CD8-positive, alpha-beta T cell (primary cell): ENCODE measurements at regions of chr10 and their contacts with region 1.

Region 1: GRCh38 chr10:3785257-3785850 is 345 bp upstream of the KLF6 start:
- DNase-seq: peak; percentile 99 to 100 (median 99)
- ATAC-seq: peak; percentile 78
- H3K4me3 ChIP-seq: peak overlapping the region; percentile 78 to 80
- H3K4me3 Mint-ChIP-seq: peak overlapping the region; percentile 97
- H3K27ac ChIP-seq: peak overlapping the region; percentile 99
- H3K27ac Mint-ChIP-seq: peak overlapping the region; percentile 97
- H3K4me1 ChIP-seq: peaks cover 29% of the 10 kb centered on the region
- H3K4me1 Mint-ChIP-seq: peaks cover 36% of the 10 kb centered on the region
- H3K27me3 ChIP-seq: no peaks in the 10 kb centered on the region
- H3K27me3 Mint-ChIP-seq: no peaks in the 10 kb centered on the region
- CTCF ChIP-seq: no peak

Region 2: GRCh38 chr10:3172446-3173170 is 612.7 kb before region 1 on chr10 and contains the start of gene PITRM1:
- CTCF ChIA-PET with region 1: no interaction called
- POLR2A ChIA-PET with region 1: interaction called, 3 read pairs
- intact Hi-C with region 1: loop called in 1 of 2 experiments (anchors 5 kb)
- DNase-seq: peak; percentile 97 to 100 (median 99)
- ATAC-seq: peak; percentile 87
- H3K4me3 ChIP-seq: peak within 1 kb of the TSS; percentile 73 to 98
- H3K4me3 Mint-ChIP-seq: peak within 1 kb of the TSS; percentile 83
- H3K27ac ChIP-seq: peak within 1 kb of the TSS; percentile 71 to 91
- H3K27ac Mint-ChIP-seq: peak within 1 kb of the TSS; percentile 93
- H3K4me1 ChIP-seq: peaks cover 12% of the 10 kb centered on the region
- H3K4me1 Mint-ChIP-seq: peaks cover 25% of the 10 kb centered on the region
- H3K27me3 ChIP-seq: no peaks in the 10 kb centered on the region
- H3K27me3 Mint-ChIP-seq: no peaks in the 10 kb centered on the region
- CTCF ChIP-seq: no peak
- total RNA-seq, gene PITRM1: 73.5 to 82.5 TPM

Region 3: DNA sequence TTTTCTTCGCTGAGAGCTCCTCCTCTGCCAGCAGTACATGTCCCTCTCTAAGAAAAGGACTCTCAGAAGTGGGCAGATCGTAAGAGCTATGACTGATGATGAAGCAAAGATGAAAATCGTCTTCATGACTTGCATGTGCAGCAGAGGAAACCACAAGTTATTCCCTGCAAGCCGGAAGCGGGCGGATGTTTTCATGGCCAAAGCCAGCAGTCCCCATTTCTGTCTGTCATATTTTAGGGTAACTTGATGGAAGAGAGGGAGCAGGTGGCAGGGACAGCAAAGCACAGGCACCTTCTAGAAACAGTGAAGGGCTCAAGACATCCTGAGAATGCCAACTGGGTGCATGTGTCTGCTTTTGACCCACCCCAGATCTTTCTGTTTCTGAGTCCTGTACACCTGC is 20.2 kb before region 1 on chr10:
- CTCF ChIA-PET with region 1: interaction called, 3 read pairs
- POLR2A ChIA-PET with region 1: interaction called, 21 read pairs
- intact Hi-C with region 1: no loop called
- DNase-seq: peak in 5 of 9 experiments; percentile 38 to 70 (median 43)
- ATAC-seq: peak; percentile 61
- H3K4me3 ChIP-seq: peak overlapping the region; percentile 12 to 32
- H3K4me3 Mint-ChIP-seq: peak overlapping the region; percentile 64
- H3K27ac ChIP-seq: peak overlapping the region in 1 of 2 experiments; percentile 42
- H3K27ac Mint-ChIP-seq: peak overlapping the region; percentile 46
- H3K4me1 ChIP-seq: peaks cover 21% of the 10 kb centered on the region
- H3K4me1 Mint-ChIP-seq: peaks cover 50% of the 10 kb centered on the region
- H3K27me3 ChIP-seq: no peaks in the 10 kb centered on the region
- H3K27me3 Mint-ChIP-seq: no peaks in the 10 kb centered on the region
- CTCF ChIP-seq: no peak

Region 4: DNA sequence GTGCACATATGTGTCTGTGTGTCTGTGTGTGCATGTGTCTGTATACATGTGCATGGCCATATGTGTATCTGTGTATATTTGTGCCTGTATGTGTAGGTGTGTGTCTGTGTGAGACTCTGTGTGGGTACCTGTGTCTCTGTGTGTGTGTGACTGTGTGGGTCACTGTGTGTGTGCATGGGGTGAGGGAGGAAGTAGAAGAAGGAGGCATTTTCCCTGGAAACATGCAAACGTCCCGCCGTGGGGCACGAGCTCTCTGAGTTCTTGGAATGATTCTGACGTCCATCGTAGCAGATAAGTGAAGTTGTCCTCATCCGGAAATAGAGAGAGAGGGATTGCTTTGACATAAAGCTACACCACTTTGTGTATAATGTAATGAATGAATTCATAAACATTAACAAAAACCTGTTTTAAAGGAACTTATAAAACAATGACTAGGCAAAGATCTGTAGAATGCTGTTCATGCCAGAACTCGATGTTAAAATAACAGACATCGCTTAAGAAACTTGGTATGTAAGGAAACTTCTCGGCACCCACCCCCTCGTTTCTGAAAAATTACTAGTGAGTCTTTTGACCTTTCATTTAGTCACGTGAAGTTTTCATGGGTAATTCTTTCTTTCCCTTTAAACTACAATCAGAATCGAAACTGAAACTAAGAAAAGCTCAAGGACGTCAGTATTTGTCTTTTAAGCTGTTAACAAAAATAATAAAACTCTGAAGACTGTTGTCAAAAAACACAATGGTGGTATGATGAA is 43.2 kb after region 1 on chr10:
- CTCF ChIA-PET with region 1: interaction called, 5 read pairs
- POLR2A ChIA-PET with region 1: interaction called, 41 read pairs
- intact Hi-C with region 1: loop called in 1 of 2 experiments (anchors 1 kb)
- DNase-seq: peak in 2 of 9 experiments; percentile 62 to 78
- ATAC-seq: peak; percentile 46
- H3K4me3 ChIP-seq: peak overlapping the region; percentile 28 to 53
- H3K4me3 Mint-ChIP-seq: peak overlapping the region; percentile 81
- H3K27ac ChIP-seq: peak overlapping the region; percentile 50 to 88
- H3K27ac Mint-ChIP-seq: peak overlapping the region; percentile 92
- H3K4me1 ChIP-seq: peaks cover 12% of the 10 kb centered on the region
- H3K4me1 Mint-ChIP-seq: peaks cover 22% of the 10 kb centered on the region
- H3K27me3 ChIP-seq: no peaks in the 10 kb centered on the region
- H3K27me3 Mint-ChIP-seq: no peaks in the 10 kb centered on the region
- CTCF ChIP-seq: no peak

Region 5: GRCh38 chr10:3873728-3874461 is 88.5 kb after region 1 on chr10:
- CTCF ChIA-PET with region 1: no interaction called
- POLR2A ChIA-PET with region 1: interaction called, 26 read pairs
- intact Hi-C with region 1: loop called (anchors 1 to 2 kb)
- DNase-seq: peak in 4 of 9 experiments; percentile 7 to 91 (median 50)
- ATAC-seq: peak; percentile 55
- H3K4me3 ChIP-seq: no peak overlapping the region
- H3K4me3 Mint-ChIP-seq: no peak overlapping the region
- H3K27ac ChIP-seq: peak overlapping the region; percentile 26 to 95
- H3K27ac Mint-ChIP-seq: peak overlapping the region; percentile 88
- H3K4me1 ChIP-seq: peaks cover 25% of the 10 kb centered on the region
- H3K4me1 Mint-ChIP-seq: peaks cover 43% of the 10 kb centered on the region
- H3K27me3 ChIP-seq: no peaks in the 10 kb centered on the region
- H3K27me3 Mint-ChIP-seq: no peaks in the 10 kb centered on the region
- CTCF ChIP-seq: no peak

Region 6: DNA sequence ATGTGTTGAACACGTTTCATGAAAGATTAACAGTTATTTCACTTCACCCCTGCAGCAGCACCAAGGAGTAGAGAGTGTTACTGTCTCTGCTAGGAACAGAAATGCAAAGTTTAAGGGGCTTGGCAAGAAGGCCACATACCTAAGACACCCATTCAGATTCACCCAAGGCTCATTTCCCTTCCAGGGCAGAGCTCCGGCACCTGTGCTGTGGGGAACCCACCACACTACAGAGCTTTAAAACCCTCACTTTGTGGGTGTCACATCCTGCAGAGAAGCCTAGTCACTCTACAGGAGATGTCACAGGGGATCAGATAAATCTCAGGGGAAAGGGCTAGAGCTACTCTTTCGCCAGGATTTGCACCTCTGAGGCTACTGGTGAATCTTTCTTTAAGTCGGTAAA is 175.7 kb after region 1 on chr10:
- CTCF ChIA-PET with region 1: interaction called, 4 read pairs
- POLR2A ChIA-PET with region 1: interaction called, 18 read pairs
- intact Hi-C with region 1: no loop called
- DNase-seq: peak; percentile 34 to 89 (median 59)
- ATAC-seq: peak; percentile 98
- H3K4me3 ChIP-seq: no peak overlapping the region
- H3K4me3 Mint-ChIP-seq: peak overlapping the region; percentile 32
- H3K27ac ChIP-seq: peak overlapping the region in 1 of 2 experiments; percentile 5
- H3K27ac Mint-ChIP-seq: peak overlapping the region; percentile 76
- H3K4me1 ChIP-seq: peaks cover 24% of the 10 kb centered on the region
- H3K4me1 Mint-ChIP-seq: peaks cover 36% of the 10 kb centered on the region
- H3K27me3 ChIP-seq: no peaks in the 10 kb centered on the region
- H3K27me3 Mint-ChIP-seq: no peaks in the 10 kb centered on the region
- CTCF ChIP-seq: no peak